ENCODE measurements at regions of chr7 and their contacts with region 1.

Region 1: DNA sequence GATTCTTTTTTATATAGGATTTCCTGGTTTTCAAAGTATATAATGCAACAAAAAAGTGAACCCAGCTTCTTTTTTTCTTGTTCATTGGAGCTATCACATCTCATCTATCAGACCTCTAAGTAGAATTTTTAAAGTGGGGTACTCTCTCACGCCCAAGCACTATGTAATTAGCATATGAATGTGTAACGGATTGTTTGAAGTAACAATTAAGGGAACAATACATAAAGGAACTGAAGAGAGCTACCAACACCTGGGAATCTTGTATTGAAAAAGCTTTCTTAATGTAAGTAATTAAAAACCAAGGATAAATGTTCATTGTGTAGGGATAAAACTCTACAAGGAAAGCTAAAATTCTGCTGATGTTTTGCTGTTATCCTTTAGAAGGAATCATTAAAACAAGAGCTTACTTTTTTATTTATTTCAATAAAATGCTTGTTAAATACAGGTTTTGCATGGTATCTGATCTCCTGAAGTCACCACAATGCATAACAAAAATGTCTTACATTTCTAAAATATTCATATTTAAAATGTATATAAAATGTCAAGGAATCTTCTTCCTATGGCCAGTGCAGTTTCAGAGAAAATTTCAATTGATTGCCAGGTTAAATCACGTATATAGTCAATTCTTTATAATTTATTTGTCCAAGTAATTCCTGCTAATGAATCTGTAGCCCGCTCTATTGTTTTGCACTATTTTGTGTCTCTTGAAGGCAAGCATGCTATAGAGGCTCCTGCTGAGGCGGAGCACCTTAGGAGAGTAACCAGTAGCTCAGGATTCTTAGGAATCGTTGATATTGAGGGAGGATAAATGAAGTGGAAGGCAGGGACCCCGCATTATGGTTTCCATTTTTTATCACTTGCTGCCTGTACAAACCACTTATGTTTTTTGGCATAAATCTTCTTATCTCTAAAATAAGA is 51.6 kb downstream of the PTPRZ1 start:
- DNase-seq: no peak
- H3K4me3 ChIP-seq: peak overlapping the region in 1 of 4 experiments; percentile 39; a peak in 1 of 8 replicates
- H3K27ac ChIP-seq: no peak overlapping the region
- H3K4me1 ChIP-seq: peaks cover 0 to 15% (median 8%) of the 10 kb centered on the region in 4 experiments; a peak in 5 of 7 replicates
- H3K27me3 ChIP-seq: no peaks in the 10 kb centered on the region
- CTCF ChIP-seq: no peak
- EP300 ChIP-seq: no peak
- POLR2A ChIP-seq: no peak
- RAD21 ChIP-seq: no peak

Region 2: DNA sequence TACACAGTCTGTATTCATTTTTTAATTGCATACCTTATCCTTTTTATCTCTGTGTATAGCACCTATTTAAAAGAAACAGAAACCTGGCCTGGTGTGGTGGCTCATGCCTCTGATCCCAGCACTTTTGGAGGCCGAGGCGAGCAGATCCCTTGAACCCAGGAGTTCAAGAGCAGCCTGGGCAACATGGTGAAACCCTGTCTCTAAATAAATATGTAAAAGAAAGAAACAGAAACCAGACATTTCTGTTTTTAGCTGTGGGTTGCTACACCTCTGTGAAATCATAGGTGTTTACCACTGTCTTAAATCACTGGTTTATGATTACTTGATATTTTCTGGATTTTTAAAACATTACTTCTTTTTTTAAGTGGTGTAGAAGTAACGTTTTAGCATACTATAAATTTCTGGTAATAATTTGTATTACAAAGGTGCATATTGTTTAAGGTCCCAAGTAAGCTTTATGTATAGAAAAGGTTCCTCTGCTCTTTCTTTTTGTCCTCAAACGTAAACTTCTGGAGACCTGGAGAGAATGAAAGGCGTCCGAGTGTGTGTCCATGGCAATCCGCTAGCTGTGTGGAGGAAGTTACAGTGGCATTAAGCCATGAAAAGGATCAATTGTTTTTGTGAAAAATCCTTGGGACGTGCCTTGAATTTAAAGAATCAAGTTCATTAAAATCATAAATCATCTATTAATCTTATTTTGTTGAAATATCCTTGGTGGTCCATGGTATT is 10.4 kb before region 1 on chr7:
- CTCF ChIA-PET with region 1: interaction called, 5 read pairs
- POLR2A ChIA-PET with region 1: interaction called, 19 read pairs
- DNase-seq: no peak
- H3K4me3 ChIP-seq: no peak overlapping the region
- H3K27ac ChIP-seq: no peak overlapping the region
- H3K4me1 ChIP-seq: peaks cover 0 to 9% (median 5%) of the 10 kb centered on the region in 4 experiments; a peak in 3 of 7 replicates
- H3K27me3 ChIP-seq: no peaks in the 10 kb centered on the region
- CTCF ChIP-seq: no peak
- EP300 ChIP-seq: no peak
- POLR2A ChIP-seq: no peak; a peak in 1 of 3 replicates
- RAD21 ChIP-seq: no peak

Region 3: GRCh38 chr7:121936951-121937623 is 12.6 kb after region 1 on chr7:
- CTCF ChIA-PET with region 1: interaction called, 5 read pairs
- POLR2A ChIA-PET with region 1: interaction called, 24 read pairs
- DNase-seq: peak in 1 of 2 experiments; percentile 33
- H3K4me3 ChIP-seq: peak overlapping the region in 1 of 4 experiments; percentile 37; a peak in 1 of 8 replicates
- H3K27ac ChIP-seq: peak overlapping the region; percentile 88
- H3K4me1 ChIP-seq: peaks cover 10 to 46% (median 29%) of the 10 kb centered on the region in 4 experiments; a peak in 6 of 7 replicates
- H3K27me3 ChIP-seq: no peaks in the 10 kb centered on the region
- CTCF ChIP-seq: no peak
- EP300 ChIP-seq: 0 out of 3 replicates have a peak, but pooled peaks of 1 of the 2 experiments have one; percentile 37
- POLR2A ChIP-seq: peak in 1 of 2 experiments; percentile 44; a peak in 2 of 3 replicates
- RAD21 ChIP-seq: no peak; a peak in 1 of 4 replicates